Right cardiac atrium (tissue), 5 donors: ENCODE measurements at regions of chr19 and their contacts with region 1.

Region 1: GRCh38 chr19:33176670-33177416 is 17.3 kb upstream of the LRP3 start:
- DNase-seq: peak; percentile 96 to 98 (median 98)
- ATAC-seq: peak; percentile 97
- H3K4me3 ChIP-seq: peak overlapping the region; percentile 77
- H3K27ac ChIP-seq: peak overlapping the region; percentile 61
- H3K4me1 ChIP-seq: peaks cover 4% of the 10 kb centered on the region
- H3K27me3 ChIP-seq: no peaks in the 10 kb centered on the region

Region 2: GRCh38 chr19:33125929-33126388 is 50.9 kb before region 1 on chr19:
- intact Hi-C with region 1: loop called in 1 of 4 experiments (anchors 5 kb)
- DNase-seq: peak in 1 of 3 donors; percentile 57
- ATAC-seq: peak; percentile 85 to 87
- H3K4me3 ChIP-seq: no peak overlapping the region
- H3K27ac ChIP-seq: no peak overlapping the region
- H3K4me1 ChIP-seq: no peaks in the 10 kb centered on the region
- H3K27me3 ChIP-seq: no peaks in the 10 kb centered on the region

Region 3: DNA sequence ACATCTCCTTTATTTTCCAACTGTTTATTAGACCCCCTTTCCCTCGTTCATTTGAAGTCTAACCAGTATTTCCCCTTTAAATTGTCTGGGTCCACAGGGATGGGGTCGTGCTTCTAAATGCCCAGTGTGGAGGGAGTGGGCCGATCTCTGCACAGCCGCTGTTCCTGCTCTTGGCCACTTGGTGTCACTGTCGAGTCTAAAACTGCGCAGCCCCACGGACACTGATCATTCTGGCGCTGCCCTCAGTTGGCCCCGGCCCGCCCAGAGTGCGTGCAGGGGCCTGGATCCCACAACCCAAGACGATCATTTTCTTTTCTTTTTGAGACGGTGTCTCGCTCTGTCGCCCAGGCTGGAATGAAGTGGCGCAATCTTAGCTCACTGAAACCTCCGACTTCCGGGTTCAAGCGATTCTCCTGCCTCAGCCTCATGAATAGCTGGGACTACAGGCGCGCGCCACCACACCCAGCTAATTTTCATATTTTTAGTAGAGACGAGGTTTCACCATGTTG is 32.9 kb before region 1 on chr19:
- intact Hi-C with region 1: loop called in 2 of 4 experiments (anchors 5 kb)
- DNase-seq: peak; percentile 61 to 86 (median 82)
- ATAC-seq: peak; percentile 92 to 96
- H3K4me3 ChIP-seq: no peak overlapping the region
- H3K27ac ChIP-seq: no peak overlapping the region
- H3K4me1 ChIP-seq: no peaks in the 10 kb centered on the region
- H3K27me3 ChIP-seq: no peaks in the 10 kb centered on the region